ENCODE measurements at regions of chr5 and their contacts with region 1.

Region 1: GRCh38 chr5:131589510-131590348 is 45.3 kb downstream of the RAPGEF6 start:
- DNase-seq: peak; percentile 58
- H3K4me3 Mint-ChIP-seq: no peak overlapping the region
- H3K27ac Mint-ChIP-seq: no peak overlapping the region
- H3K4me1 Mint-ChIP-seq: peaks cover 8% of the 10 kb centered on the region
- H3K27me3 Mint-ChIP-seq: no peaks in the 10 kb centered on the region
- CTCF ChIP-seq: peak; percentile 98

Region 2: DNA sequence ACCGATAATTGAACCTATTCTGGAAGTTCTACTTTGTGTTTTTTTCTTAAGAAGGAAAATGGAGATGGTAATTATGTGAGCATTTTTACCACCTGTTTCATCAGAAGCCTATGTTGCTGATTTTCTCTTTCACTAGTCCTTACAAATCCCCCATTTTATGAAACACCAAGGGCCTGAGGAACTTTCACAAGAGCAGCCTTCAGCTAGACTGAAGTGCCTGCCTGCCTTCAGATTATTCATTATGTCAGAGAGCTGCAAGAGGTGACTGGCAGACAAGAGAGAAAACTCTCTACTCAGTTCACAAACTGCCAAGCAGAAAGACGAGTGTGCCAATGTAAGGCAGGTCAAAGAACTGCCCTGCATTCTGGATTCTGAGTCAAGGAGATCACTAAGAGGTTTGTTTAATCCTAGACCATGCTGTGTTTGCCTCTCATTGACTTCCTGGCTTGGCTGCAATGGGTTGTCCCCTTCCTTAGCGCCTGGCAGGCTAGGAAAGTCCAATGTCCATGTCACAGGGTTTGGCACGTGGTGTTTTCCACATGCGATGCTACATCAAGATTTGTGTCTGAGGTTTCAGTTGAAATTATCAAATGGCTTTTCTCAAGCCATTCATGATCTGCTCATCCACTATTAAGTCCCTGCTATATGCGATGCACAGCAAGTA is 182.6 kb before region 1 on chr5:
- CTCF ChIA-PET with region 1: no interaction called
- POLR2A ChIA-PET with region 1: no interaction called
- intact Hi-C with region 1: no loop called
- DNase-seq: no peak
- H3K4me3 Mint-ChIP-seq: no peak overlapping the region
- H3K27ac Mint-ChIP-seq: no peak overlapping the region
- H3K4me1 Mint-ChIP-seq: no peaks in the 10 kb centered on the region
- H3K27me3 Mint-ChIP-seq: no peaks in the 10 kb centered on the region
- CTCF ChIP-seq: no peak

Region 3: DNA sequence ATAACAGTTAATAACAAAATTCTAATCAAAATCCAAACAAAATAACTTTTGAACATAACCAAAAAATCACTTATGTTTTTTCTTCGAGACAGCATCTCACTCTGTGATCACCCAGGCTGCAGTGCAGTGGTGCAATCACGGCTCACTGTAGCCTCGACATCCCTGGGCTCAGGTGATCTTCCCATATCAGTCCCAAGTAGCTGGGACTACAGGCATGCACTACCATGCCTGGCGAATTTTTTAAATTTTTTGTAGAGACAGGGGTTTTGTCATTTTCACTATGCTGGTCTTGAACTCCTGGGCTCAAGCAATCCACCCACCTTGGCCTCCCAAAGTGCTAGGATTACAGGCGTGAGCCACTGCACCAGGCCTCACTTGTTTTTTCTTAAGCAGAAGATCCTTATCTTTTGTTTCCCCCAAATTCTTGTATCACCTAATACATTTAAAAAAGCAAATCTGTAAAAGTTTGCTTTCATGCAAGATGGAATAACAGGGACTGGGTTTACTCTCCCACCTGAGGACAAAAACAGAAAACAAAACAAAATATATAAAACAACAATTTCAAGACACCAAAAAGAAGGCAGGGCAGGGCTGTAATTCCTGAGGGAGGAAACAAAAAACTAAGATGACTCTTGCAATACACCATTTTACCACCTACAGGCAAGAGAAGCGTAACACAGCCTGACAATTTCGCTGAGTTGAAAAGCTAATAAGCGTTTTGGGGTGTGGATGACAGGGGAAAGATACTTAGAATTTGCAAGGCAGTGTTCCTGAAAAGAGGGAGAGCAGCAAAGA is 26.1 kb before region 1 on chr5:
- CTCF ChIA-PET with region 1: interaction called, 26 read pairs
- POLR2A ChIA-PET with region 1: no interaction called
- intact Hi-C with region 1: no loop called
- DNase-seq: no peak
- H3K4me3 Mint-ChIP-seq: no peak overlapping the region
- H3K27ac Mint-ChIP-seq: no peak overlapping the region
- H3K4me1 Mint-ChIP-seq: no peaks in the 10 kb centered on the region
- H3K27me3 Mint-ChIP-seq: no peaks in the 10 kb centered on the region
- CTCF ChIP-seq: no peak

Region 4: DNA sequence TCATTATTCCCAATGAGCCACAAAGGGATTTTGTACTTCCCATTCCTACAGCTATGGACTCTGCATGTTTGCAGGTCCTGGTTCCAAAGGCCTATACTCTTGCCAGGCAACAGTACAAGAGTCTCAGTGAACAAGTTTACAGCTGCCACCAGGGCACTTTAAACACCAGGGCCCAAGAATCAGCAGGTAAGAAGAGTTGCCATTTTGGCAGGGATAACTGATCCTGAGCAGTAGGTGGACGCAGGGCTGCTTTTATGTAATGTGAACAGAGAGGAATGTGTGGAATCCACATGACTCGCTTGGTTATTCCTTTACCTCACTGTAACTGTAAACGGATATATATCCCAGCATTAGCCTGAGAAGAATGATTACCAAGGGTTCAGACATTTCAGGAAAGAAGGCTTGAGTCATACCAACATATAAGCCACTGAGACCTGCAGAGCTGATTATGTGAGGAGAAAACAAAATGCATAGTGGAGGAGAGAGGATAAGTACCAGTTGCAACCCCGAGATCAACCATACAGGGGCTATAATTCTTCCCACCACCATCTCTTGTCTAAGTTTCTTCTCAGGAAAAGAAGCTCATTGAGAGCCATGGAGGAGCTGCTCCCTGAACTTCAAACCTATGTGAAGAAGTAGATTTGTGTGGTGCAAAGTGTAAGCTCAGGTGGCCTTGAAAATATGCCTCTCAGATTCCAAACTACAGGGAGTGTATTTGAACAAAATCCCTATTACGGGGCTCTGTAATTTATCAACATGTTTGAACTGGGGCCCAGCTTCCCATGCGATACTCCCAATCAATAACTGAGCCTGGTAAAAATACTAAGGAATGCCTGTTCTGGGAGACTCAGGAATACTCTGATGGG is 20.7 kb after region 1 on chr5:
- CTCF ChIA-PET with region 1: interaction called, 55 read pairs
- POLR2A ChIA-PET with region 1: interaction called, 4 read pairs
- intact Hi-C with region 1: no loop called
- DNase-seq: peak; percentile 42
- H3K4me3 Mint-ChIP-seq: no peak overlapping the region
- H3K27ac Mint-ChIP-seq: no peak overlapping the region
- H3K4me1 Mint-ChIP-seq: peaks cover 29% of the 10 kb centered on the region
- H3K27me3 Mint-ChIP-seq: no peaks in the 10 kb centered on the region
- CTCF ChIP-seq: no peak

Region 5: DNA sequence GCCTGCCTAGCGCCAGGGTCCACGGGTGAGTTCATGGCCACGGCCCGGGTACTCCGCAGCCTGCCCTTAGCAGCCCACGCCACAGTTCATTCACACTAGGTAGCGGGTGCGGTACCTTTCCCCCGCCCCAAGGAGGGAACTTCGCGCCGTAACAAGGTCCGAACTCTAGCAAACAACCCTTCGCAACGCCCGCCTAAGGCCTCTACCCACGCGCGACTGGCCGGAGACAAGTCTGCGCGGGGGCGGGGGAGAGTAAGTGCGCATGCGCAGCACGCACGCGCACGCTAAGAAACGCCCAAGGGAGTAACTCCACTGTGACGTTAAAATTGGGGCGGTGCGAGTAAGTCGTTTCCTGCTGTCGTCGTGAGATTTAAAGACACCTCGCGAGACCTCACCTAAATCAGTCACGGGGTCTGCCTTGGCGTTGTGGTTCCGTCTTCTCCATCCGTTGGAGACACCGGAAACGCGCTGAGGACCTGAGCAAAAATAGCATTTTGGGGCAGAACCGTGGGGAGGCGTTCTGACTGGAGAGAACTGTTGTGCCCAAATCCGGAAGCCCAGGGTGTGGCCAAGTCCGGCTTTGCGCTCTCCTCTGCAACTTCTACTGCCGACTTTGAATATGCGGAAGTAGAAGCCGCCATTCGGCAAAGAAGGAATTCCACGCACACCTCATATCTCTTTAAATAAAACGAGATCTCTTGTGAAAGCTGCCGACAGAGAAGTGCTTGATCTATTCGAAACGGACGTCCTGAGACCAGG is 45.4 kb after region 1 on chr5 and contains the start of gene RAPGEF6:
- CTCF ChIA-PET with region 1: interaction called, 22 read pairs
- POLR2A ChIA-PET with region 1: interaction called, 7 read pairs
- intact Hi-C with region 1: loop called (anchors 1 kb)
- DNase-seq: peak; percentile 100
- H3K4me3 Mint-ChIP-seq: no peak within 1 kb of the TSS
- H3K27ac Mint-ChIP-seq: peak within 1 kb of the TSS; percentile 97
- H3K4me1 Mint-ChIP-seq: peaks cover 6% of the 10 kb centered on the region
- H3K27me3 Mint-ChIP-seq: no peaks in the 10 kb centered on the region
- CTCF ChIP-seq: no peak
- total RNA-seq, gene RAPGEF6: 20.5 and 23.4 TPM in 2 replicates

Region 6: GRCh38 chr5:131679913-131680312 is 90.2 kb after region 1 on chr5:
- CTCF ChIA-PET with region 1: interaction called, 10 read pairs
- POLR2A ChIA-PET with region 1: interaction called, 3 read pairs
- intact Hi-C with region 1: no loop called
- DNase-seq: peak; percentile 48
- H3K4me3 Mint-ChIP-seq: no peak overlapping the region
- H3K27ac Mint-ChIP-seq: peak overlapping the region; percentile 20
- H3K4me1 Mint-ChIP-seq: peaks cover 19% of the 10 kb centered on the region
- H3K27me3 Mint-ChIP-seq: no peaks in the 10 kb centered on the region
- CTCF ChIP-seq: no peak

Region 7: DNA sequence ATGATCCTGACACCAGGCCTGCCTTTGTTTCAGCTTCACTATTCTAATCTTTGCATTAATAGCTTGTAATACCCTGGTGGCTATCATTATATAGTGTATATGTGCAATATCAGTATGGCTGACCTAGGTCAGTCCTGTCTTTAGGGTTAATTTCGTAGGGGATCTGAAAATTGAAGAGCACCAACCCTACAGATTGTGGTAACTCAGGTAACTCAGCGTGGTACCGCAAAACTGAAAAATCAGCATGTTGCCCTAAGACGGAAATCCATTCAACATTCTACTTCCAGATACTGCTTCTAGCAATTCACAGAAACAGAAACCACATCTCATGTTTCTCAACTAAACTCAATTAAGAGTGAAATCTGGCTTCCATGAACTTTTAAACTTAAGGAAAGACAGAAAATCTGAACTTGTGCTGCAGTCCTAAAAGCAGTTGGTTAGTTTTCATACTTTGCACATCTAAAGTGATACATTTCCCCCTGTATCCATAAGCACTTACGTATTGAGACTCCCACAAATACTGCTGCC is 128.8 kb after region 1 on chr5:
- CTCF ChIA-PET with region 1: interaction called, 10 read pairs
- POLR2A ChIA-PET with region 1: no interaction called
- intact Hi-C with region 1: no loop called
- DNase-seq: no peak
- H3K4me3 Mint-ChIP-seq: no peak overlapping the region
- H3K27ac Mint-ChIP-seq: no peak overlapping the region
- H3K4me1 Mint-ChIP-seq: no peaks in the 10 kb centered on the region
- H3K27me3 Mint-ChIP-seq: no peaks in the 10 kb centered on the region
- CTCF ChIP-seq: no peak

Region 8: GRCh38 chr5:131959906-131960305 is 370.2 kb after region 1 on chr5:
- CTCF ChIA-PET with region 1: no interaction called
- POLR2A ChIA-PET with region 1: no interaction called
- intact Hi-C with region 1: no loop called
- DNase-seq: no peak
- H3K4me3 Mint-ChIP-seq: no peak overlapping the region
- H3K27ac Mint-ChIP-seq: no peak overlapping the region
- H3K4me1 Mint-ChIP-seq: no peaks in the 10 kb centered on the region
- H3K27me3 Mint-ChIP-seq: peaks cover 36% of the 10 kb centered on the region
- CTCF ChIP-seq: no peak

Region 9: DNA sequence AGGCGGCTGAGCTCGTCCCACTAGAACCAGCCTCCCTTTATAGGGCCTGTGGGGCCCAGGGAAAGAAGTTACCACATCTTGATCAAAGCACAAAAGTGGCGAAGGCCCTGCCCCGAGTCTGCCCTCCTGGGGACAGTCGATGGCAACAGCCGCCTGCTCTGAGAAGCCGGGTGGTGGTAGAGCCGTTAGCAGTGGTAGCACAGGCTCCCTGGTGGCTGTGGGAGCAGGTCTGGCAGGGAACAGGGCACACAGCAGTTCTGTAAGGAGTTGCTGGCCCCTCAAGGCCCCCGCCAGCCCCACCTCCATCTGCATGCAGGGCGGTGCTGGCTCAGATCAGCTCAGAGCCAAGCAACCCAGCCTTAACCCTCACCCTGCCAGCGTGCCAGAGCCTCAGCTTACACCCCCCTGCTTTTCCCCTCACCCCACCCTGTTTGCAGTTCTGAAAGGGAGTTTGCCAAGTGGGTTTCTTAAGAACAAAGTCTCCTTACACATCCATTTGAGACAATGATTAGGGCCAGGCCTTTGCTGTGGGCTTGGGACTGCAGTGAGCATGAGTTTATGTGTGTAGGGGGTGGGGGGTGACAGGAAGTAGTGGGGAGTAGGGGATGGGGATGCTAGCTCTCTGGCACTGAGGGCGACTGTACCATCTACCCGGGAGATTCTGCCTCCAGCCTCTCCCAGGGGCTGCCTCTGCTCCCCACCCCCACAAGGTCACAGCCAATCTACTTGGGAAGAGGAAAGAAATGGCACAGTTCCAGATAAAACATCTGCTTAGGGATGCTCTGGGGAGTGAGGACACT is 409.9 kb after region 1 on chr5:
- CTCF ChIA-PET with region 1: interaction called, 171 read pairs
- POLR2A ChIA-PET with region 1: no interaction called
- intact Hi-C with region 1: no loop called
- DNase-seq: no peak
- H3K4me3 Mint-ChIP-seq: no peak overlapping the region
- H3K27ac Mint-ChIP-seq: no peak overlapping the region
- H3K4me1 Mint-ChIP-seq: peaks cover 6% of the 10 kb centered on the region
- H3K27me3 Mint-ChIP-seq: no peaks in the 10 kb centered on the region
- CTCF ChIP-seq: no peak